GM10248 (cell line): ENCODE measurements at regions of chr1 and their contacts with region 1.

Region 1: DNA sequence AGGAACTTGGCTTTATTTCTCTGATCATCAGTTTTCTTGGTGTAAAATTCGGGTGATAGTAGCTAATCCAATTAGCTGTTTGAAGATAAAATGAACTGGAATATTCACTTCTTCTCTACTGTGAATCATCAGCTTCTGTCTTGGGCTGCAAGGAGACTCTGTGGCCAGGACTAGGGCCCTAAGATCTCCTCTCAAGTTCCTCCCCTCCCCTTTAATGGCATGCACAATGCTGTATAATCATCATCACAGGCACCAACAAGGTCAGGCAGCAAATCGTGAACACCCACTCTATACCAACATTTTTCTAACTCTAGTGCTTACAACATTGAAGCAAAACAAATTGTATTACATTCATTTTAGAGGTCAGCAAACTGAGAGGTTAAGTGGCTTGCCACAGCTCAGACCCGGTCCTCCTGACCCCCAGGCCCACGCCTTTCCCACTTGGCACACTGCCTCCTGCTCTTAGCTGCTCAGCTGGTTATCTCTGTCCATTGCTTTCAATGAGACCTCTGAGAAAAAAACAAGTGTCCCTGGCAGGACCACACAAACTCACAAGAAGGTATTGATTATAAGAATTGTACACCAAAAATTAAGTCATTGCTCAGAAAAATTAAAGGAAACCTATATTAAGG is 31.8 kb downstream of the LRRC52 start:
- DNase-seq: no peak
- CTCF ChIP-seq: no peak

Region 2: DNA sequence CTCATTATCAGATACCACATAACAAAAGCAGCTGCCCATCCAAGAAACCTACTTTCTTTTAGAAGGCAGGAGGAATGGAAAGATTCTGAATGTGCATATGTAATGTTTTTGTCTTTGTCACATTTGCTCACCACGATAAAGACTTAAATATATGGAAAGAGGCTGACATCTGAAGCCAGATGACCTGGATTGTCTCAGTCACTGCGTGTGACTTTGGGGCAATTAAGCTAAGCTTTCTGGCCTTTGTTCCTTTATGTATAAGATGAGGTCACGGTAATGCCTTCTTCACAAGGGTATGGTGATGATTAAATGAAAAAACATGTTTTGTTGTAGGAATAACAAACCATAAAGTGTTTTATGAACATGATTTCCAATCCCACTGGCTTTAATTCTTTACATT is 10.9 kb after region 1 on chr1:
- CTCF ChIA-PET with region 1: interaction called, 26 read pairs
- POLR2A ChIA-PET with region 1: no interaction called
- DNase-seq: no peak
- CTCF ChIP-seq: no peak